ENCODE measurements at regions of chr15 and their contacts with region 1.

Region 1: GRCh38 chr15:63752075-63752684 is 81.6 kb downstream of the HERC1 start:
- DNase-seq: peak; percentile 64 to 76
- ATAC-seq: peak; percentile 93 to 97
- H3K4me3 ChIP-seq: no peak overlapping the region
- H3K27ac ChIP-seq: no peak overlapping the region
- H3K4me1 ChIP-seq: no peaks in the 10 kb centered on the region
- CTCF ChIP-seq: peak; percentile 93
- EP300 ChIP-seq: no peak
- POLR2A ChIP-seq: no peak
- RAD21 ChIP-seq: peak; percentile 92

Region 2: GRCh38 chr15:63504247-63504978 is 247.8 kb before region 1 on chr15 and contains the start of gene USP3:
- CTCF ChIA-PET with region 1: no interaction called
- POLR2A ChIA-PET with region 1: no interaction called
- DNase-seq: peak; percentile 67 to 97
- ATAC-seq: peak; percentile 52 to 73
- H3K4me3 ChIP-seq: peak within 1 kb of the TSS; percentile 77
- H3K27ac ChIP-seq: peak within 1 kb of the TSS; percentile 99
- H3K4me1 ChIP-seq: peaks cover 64% of the 10 kb centered on the region
- CTCF ChIP-seq: peak; percentile 30; the same call in 1 of the 3 replicates
- EP300 ChIP-seq: no peak; a peak in 1 of 5 replicates
- POLR2A ChIP-seq: peak; percentile 47
- RAD21 ChIP-seq: peak in 1 of 2 experiments; percentile 73
- polyA plus RNA-seq, gene USP3: 97.4 and 99.1 TPM in 2 replicates

Region 3: DNA sequence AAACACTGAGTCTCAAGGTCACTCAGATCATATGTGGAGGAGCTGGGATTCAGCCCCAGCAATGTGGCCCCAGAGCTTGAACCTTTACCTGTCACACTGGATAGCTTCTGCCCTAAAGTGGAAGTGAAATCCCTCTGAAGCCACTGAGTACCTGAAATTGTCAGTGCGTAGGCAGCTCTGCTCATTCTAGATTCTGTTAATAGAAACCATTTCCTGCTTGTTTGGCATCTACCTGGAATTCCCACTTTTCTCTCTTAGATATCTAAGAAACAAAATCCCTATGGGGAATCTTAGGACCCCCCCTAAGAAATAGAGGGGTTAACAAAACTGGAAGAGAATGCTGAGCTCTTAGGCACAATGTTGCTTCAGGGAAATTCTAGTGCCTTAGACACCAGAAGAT is 125.2 kb before region 1 on chr15:
- CTCF ChIA-PET with region 1: no interaction called
- POLR2A ChIA-PET with region 1: no interaction called
- DNase-seq: no peak
- ATAC-seq: no peak
- H3K4me3 ChIP-seq: no peak overlapping the region
- H3K27ac ChIP-seq: no peak overlapping the region
- H3K4me1 ChIP-seq: no peaks in the 10 kb centered on the region
- CTCF ChIP-seq: no peak
- EP300 ChIP-seq: no peak
- POLR2A ChIP-seq: no peak
- RAD21 ChIP-seq: no peak

Region 4: DNA sequence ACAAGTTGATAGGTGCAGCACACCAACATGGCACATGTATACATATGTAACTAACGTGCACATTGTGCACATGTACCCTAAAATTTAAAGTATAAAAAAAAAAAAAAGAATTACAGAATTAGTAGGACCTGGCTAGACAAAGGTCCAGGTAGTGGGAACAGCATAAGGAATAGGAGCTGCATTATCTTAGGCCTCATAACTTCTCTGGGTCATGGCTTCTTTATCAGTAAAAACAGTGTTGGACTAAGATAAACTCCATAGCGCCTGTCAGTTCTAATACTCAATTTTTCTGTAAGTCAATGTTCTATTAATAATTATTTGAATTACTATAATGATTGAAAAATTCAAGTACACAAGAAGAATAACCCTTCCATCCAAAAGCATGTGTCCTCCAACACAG is 16.7 kb before region 1 on chr15:
- CTCF ChIA-PET with region 1: interaction called, 10 read pairs
- POLR2A ChIA-PET with region 1: no interaction called
- DNase-seq: no peak
- ATAC-seq: no peak
- H3K4me3 ChIP-seq: no peak overlapping the region
- H3K27ac ChIP-seq: no peak overlapping the region
- H3K4me1 ChIP-seq: no peaks in the 10 kb centered on the region
- CTCF ChIP-seq: no peak
- EP300 ChIP-seq: no peak
- POLR2A ChIP-seq: no peak
- RAD21 ChIP-seq: no peak

Region 5: GRCh38 chr15:63891079-63891767 is 139.0 kb after region 1 on chr15:
- CTCF ChIA-PET with region 1: interaction called, 18 read pairs
- POLR2A ChIA-PET with region 1: no interaction called
- DNase-seq: peak; percentile 87 to 88
- ATAC-seq: peak; percentile 80 to 96
- H3K4me3 ChIP-seq: no peak overlapping the region
- H3K27ac ChIP-seq: no peak overlapping the region
- H3K4me1 ChIP-seq: peaks cover 3% of the 10 kb centered on the region; the same call in 2 of the 3 replicates
- CTCF ChIP-seq: peak; percentile 98
- EP300 ChIP-seq: no peak
- POLR2A ChIP-seq: no peak
- RAD21 ChIP-seq: peak; percentile 79 to 83

Region 6: DNA sequence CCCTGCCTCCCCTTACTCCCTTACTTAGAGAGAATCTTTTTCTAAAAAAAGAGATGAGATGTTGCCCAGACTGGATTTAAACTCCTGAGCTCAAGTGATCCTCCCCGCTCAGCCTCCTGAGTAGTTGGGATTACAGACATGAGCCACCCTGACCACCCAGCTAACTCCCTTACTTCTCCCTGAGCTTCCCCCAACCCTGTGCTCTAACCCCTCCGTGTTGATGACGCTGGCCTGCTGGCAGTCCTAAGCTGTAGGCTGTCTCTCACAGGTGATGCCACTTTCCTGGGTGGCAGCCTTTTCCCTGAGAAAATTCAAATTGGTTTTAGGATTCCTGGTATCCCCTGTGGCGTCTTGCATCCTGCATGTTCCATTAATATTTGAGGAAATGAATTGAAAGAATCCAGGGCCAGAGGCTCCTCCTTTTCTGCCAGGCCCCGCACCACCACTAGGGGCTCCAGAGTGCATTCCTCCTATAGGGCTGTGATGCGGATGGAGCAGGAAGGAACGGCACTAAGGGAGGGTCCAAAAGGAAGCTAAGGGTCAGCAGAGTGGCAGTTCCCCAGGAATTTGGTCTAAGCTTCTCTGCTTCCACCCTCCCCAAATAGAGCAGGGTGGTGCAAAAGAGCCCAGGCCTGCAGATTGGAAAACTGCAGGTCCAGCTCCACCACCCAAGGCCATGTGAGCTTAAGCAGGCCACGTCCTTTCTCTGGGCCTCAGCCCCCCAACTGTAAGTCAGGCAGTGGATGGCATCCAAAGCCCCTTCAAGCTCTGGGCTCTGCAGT is 193.0 kb after region 1 on chr15:
- CTCF ChIA-PET with region 1: interaction called, 11 read pairs
- POLR2A ChIA-PET with region 1: no interaction called
- DNase-seq: peak; percentile 64 to 90
- ATAC-seq: peak; percentile 89 to 97
- H3K4me3 ChIP-seq: no peak overlapping the region
- H3K27ac ChIP-seq: peak overlapping the region in 1 of 2 experiments; percentile 12; a peak in 1 of 6 replicates
- H3K4me1 ChIP-seq: no peaks in the 10 kb centered on the region
- CTCF ChIP-seq: peak; percentile 86
- EP300 ChIP-seq: no peak
- POLR2A ChIP-seq: no peak
- RAD21 ChIP-seq: peak; percentile 62 to 76

Region 7: DNA sequence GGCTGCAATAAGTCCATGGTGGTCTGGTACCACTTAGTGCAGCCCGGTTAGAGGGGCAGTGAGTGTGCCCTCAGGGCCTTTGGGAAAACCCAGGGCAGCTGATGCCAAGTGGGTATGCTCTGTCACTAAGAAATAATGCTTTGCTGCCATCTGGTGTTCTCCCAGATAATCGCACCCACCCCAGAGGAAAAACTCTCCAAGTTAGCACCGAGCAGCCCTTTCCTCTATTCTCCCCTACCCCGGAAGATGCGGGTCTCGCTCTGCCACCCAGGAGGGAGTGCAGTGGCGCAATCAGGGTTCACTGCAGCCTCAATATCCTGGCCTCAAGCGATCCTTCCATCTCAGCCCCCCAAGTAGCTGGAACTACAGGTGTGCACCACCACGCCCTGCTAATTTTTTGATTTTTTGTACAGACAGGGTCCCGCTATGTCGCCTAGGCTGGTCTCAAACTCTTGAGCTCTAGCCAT is 315.4 kb after region 1 on chr15:
- CTCF ChIA-PET with region 1: interaction called, 139 read pairs
- POLR2A ChIA-PET with region 1: interaction called, 3 read pairs
- DNase-seq: peak; percentile 61 to 80
- ATAC-seq: peak; percentile 77 to 88
- H3K4me3 ChIP-seq: no peak overlapping the region
- H3K27ac ChIP-seq: peak overlapping the region in 1 of 2 experiments; percentile 44; a peak in 2 of 6 replicates
- H3K4me1 ChIP-seq: peaks cover 24% of the 10 kb centered on the region
- CTCF ChIP-seq: peak; percentile 93
- EP300 ChIP-seq: no peak
- POLR2A ChIP-seq: no peak
- RAD21 ChIP-seq: peak; percentile 97 to 98

Measured in A549 (cell line).